ENCODE measurements at regions of chr14 and their contacts with region 1.

Region 1: DNA sequence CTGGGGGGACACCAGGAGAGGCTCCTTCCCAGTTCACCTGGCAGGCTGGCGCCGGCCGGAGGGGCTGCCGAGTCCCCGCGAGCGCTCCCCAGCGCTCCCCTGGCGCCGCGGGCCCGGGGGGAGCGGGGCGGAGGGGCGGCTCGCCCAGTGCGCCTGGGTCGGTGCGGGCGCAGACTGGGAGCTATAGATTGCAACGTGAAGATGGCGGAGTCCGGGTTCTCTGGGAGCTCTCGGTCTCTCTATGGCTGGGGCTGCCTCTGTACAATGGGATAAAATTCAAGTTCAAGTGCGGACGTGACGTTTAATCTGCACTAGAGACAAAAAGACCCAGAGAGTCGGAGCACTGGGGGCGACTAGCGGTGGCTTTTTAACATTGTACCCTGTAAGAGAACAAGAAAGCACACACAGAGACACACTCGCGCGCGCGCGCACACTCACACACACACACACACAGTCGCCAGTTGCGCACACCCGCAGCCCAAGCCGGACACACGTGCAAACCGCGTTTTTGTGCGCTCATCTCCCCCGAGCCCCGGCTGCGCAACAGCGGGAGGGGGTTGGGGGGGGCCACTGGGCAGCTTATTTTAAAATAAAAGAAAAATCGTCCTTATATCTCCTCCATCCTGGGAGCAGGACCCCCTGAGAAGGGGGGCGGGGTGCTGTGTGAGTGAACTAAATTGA is at the start of gene BCL11B:
- DNase-seq: peak; percentile 98
- ATAC-seq: peak; percentile 72
- H3K4me3 Mint-ChIP-seq: peak within 1 kb of the TSS; percentile 86
- H3K27ac Mint-ChIP-seq: peak within 1 kb of the TSS; percentile 96
- H3K4me1 Mint-ChIP-seq: peaks cover 23% of the 10 kb centered on the region
- H3K27me3 Mint-ChIP-seq: peaks cover 2% of the 10 kb centered on the region
- CTCF ChIP-seq: peak; percentile 67
- total RNA-seq, gene BCL11B: 48.5 to 53.0 TPM

Region 2: DNA sequence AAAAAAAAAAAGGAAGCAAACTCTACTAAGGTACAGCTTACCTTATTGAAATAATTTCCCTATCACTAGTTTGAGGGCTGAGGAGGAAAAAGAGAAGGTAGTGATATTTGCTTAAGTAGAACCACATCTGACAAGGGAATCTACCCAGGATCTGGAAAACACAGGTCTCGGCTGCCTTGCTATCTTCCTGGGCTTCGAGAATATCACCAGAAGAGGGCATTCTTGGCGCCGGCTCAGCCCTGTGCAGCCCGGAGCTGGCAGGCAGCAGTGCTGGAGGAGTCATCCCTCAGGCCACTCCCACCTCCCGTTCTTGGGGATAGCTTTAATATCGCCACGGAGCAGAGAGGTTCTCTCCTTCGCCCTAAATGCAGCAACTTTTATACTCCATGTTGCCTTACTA is 1293.8 kb before region 1 on chr14:
- CTCF ChIA-PET with region 1: interaction called, 3 read pairs
- POLR2A ChIA-PET with region 1: interaction called, 5 read pairs
- intact Hi-C with region 1: loop called (anchors 5 kb)
- DNase-seq: peak; percentile 90
- ATAC-seq: peak; percentile 84
- H3K4me3 Mint-ChIP-seq: peak overlapping the region; percentile 89
- H3K27ac Mint-ChIP-seq: peak overlapping the region; percentile 95
- H3K4me1 Mint-ChIP-seq: peaks cover 48% of the 10 kb centered on the region
- H3K27me3 Mint-ChIP-seq: no peaks in the 10 kb centered on the region
- CTCF ChIP-seq: peak; percentile 60

Region 3: DNA sequence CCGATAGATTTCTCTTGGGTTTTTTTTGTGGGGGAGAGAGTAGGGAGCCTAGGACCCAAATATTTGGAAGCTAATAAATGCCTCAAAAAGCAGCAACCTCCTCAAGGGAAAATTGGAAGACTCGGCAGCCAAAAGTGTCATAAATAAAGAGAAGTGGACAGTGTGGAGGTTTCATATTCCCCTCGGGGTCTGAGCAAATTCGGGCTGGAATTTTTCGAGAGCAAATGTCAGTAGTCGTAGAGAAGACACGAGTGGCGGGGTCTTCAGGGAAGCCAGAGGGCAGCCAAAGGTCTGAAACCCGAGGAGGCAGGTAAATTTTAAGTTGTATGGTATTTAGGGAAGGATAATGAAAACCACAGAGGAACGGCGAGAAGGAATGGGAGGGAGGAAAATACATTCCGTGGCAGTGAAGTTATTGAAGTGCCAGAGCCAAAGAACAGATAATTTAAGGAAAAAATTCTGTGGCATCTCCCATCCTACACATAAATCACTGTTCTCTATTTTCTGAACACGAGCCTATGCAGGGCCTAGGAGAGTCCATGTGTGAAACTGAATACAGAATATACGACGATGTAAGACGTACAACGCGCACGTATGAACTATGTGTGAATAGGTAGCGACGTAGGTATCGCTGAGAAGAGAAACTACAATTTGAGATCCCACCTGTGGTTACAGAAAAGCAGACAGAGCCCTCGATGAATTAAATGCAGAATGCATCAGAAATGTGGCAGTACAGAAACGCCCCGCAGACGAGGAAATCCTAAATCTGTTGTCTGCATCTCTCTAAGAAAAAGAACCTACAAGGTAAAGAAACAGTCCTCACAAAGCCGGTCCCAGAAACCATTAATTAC is 13.0 kb before region 1 on chr14:
- CTCF ChIA-PET with region 1: interaction called, 34 read pairs
- POLR2A ChIA-PET with region 1: interaction called, 82 read pairs
- intact Hi-C with region 1: no loop called
- DNase-seq: peak; percentile 69
- ATAC-seq: peak; percentile 50
- H3K4me3 Mint-ChIP-seq: peak overlapping the region; percentile 86
- H3K27ac Mint-ChIP-seq: peak overlapping the region; percentile 98
- H3K4me1 Mint-ChIP-seq: peaks cover 77% of the 10 kb centered on the region
- H3K27me3 Mint-ChIP-seq: no peaks in the 10 kb centered on the region
- CTCF ChIP-seq: no peak

Region 4: GRCh38 chr14:99395909-99396530 is 123.9 kb after region 1 on chr14:
- CTCF ChIA-PET with region 1: no interaction called
- POLR2A ChIA-PET with region 1: no interaction called
- intact Hi-C with region 1: no loop called
- DNase-seq: peak; percentile 66
- ATAC-seq: peak; percentile 94
- H3K4me3 Mint-ChIP-seq: no peak overlapping the region
- H3K27ac Mint-ChIP-seq: peak overlapping the region; percentile 49
- H3K4me1 Mint-ChIP-seq: peaks cover 8% of the 10 kb centered on the region
- H3K27me3 Mint-ChIP-seq: no peaks in the 10 kb centered on the region
- CTCF ChIP-seq: no peak